ENCODE measurements at regions of chr14 and their contacts with region 1.

Region 1: DNA sequence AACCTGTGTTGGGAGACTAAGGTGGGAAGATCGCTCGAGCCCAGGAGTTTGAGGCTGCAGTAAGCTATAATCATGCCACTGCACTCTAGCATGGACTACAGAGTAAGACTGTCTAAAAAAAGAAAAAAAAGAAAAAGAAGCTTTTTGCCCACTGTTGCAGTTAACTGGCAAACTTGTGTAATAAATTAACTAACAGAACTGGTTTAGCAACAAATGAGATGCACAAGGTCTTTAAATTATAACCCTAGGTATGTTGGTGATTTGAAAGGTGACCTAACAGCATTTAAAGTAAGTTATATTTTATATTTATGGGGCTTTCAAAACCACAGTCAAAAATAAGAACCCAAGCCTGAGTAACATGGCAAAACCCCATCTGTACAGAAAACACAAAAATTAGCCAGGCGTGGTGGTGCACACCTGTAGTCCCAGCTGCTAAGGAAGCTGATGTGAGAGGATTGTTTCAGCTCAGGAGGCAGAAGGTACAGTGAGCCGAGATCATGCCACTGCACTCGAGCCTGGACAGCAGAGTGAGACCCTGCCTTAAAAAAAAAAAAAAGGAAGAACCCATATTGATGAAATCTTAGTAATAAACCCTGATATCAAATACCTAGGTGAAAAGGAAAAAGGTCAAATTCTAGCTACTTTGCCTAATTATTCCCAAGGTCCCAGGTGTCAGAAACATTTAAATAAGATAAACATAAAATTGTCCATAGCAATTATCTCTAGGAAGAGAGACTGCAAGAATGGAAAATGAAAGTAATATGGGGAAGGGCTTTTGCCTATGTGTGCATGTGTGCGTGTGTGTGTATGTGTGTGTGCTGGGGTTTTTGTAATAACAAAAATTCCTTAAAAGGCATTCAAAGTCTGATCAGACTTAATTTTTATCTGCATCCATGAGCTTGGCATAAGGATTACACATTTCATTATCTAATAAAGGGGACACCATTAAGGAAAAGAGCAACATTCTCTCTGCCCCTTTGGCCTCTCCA is 15.4 kb downstream of the SYNE2 start:
- DNase-seq: peak; percentile 84
- H3K4me3 ChIP-seq: peak overlapping the region; percentile 27
- H3K27ac ChIP-seq: peak overlapping the region; percentile 89
- H3K4me1 ChIP-seq: peaks cover 88% of the 10 kb centered on the region
- CTCF ChIP-seq: no peak

Region 2: DNA sequence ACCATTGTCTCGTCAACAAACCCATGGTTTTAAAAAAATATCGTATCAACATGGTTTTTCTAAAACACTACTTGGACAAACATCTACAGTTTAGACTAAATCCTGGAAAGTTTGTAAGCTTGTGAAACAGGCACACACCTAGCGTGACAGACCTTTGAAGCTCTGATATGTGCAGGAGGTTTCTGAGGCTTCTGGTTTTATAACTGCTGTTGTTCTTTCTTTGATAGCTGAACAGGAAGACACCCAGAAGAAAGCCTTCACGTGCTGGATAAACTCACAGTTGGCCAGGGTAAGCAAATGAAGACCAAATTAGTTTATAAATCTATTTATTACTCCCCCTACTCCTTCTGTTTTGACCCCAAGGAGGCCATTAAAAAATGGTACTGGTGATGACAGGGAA is 72.2 kb after region 1 on chr14:
- CTCF ChIA-PET with region 1: no interaction called
- POLR2A ChIA-PET with region 1: no interaction called
- intact Hi-C with region 1: loop called (anchors 2 kb)
- DNase-seq: peak; percentile 70
- H3K4me3 ChIP-seq: peak overlapping the region; percentile 4
- H3K27ac ChIP-seq: peak overlapping the region; percentile 70
- H3K4me1 ChIP-seq: peaks cover 40% of the 10 kb centered on the region
- CTCF ChIP-seq: no peak